ENCODE measurements at regions of chr4 and their contacts with region 1.

Region 1: DNA sequence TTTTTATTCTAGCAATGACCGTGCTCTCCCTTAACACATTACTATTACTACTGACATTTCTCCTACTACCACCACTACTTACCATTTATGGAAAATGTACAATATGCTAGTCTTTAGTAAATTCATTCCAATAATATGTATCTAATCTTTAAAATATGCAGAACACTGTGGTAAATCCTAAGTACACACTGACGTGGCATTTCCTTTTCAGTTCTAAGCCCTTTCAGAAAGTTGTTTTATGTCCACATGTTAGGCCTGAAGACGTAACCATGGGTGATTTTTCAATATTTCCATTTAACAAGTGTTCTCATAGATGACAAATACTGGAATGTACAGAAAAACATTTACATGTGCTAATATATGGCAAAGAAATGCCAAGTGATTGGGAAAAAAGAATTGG is 268.6 kb upstream of the SLIT2 start:
- DNase-seq: peak; percentile 98
- H3K4me3 ChIP-seq: no peak overlapping the region
- CTCF ChIP-seq: no peak

Region 2: GRCh38 chr4:19478791-19479190 is 504.3 kb before region 1 on chr4:
- CTCF ChIA-PET with region 1: no interaction called
- POLR2A ChIA-PET with region 1: no interaction called
- DNase-seq: peak; percentile 29
- H3K4me3 ChIP-seq: no peak overlapping the region
- CTCF ChIP-seq: no peak

Region 3: DNA sequence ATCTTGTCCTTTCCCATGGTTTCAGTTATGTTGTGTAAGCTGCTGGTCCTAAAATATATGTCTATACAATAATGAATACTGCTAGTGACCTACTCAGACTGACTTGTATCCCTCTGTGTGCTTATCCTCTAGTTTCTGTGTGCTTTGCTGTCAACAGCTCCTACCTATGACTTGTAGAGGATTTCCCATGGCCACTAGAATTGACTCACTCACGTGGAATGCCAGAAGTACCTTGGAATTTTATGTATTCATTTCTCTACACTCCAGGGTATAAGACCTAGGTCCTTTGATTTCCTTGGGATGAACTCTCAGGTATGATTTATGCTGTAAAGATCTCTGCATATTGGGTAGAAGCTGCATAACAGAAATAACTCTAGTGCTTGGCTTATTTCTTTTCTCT is 11.2 kb before region 1 on chr4:
- CTCF ChIA-PET with region 1: interaction called, 13 read pairs
- POLR2A ChIA-PET with region 1: no interaction called
- DNase-seq: no peak
- H3K4me3 ChIP-seq: no peak overlapping the region
- CTCF ChIP-seq: no peak

Measured in AG04449 (cell line).